ENCODE measurements at regions of chr20 and their contacts with region 1.

Region 1: GRCh38 chr20:35994994-35995453 is 26.6 kb downstream of the CNBD2 start:
- DNase-seq: peak; percentile 83
- ATAC-seq: peak; percentile 92
- H3K4me3 Mint-ChIP-seq: no peak overlapping the region
- H3K27ac Mint-ChIP-seq: no peak overlapping the region
- H3K4me1 Mint-ChIP-seq: peaks cover 4% of the 10 kb centered on the region
- H3K27me3 Mint-ChIP-seq: peaks cover 10% of the 10 kb centered on the region

Region 2: DNA sequence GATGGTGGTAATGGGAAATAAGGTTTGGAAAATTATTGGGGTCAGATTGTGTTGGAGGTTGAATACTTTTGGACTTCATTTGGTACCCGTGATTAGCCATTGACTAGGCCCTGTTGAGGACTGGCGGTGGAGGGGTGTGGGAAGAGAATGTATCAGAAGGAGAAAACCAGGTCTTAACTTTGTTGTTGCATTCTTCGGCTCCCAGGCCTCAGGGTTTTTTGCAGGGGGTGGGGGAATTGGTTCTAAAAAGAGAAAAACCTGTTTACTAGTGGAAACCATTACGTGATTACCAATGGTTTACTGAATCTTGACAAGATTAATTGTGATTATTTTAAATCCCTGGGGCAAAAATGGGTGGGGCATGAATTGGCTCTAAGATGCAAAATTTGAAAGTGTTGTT is 138.2 kb before region 1 on chr20:
- CTCF ChIA-PET with region 1: no interaction called
- DNase-seq: no peak
- ATAC-seq: no peak
- H3K4me3 Mint-ChIP-seq: no peak overlapping the region
- H3K27ac Mint-ChIP-seq: no peak overlapping the region
- H3K4me1 Mint-ChIP-seq: peaks cover 4% of the 10 kb centered on the region
- H3K27me3 Mint-ChIP-seq: no peaks in the 10 kb centered on the region

Region 3: GRCh38 chr20:35978041-35978513 is 16.9 kb before region 1 on chr20:
- CTCF ChIA-PET with region 1: interaction called, 62 read pairs
- DNase-seq: no peak
- ATAC-seq: no peak
- H3K4me3 Mint-ChIP-seq: no peak overlapping the region
- H3K27ac Mint-ChIP-seq: no peak overlapping the region
- H3K4me1 Mint-ChIP-seq: no peaks in the 10 kb centered on the region
- H3K27me3 Mint-ChIP-seq: peaks cover 7% of the 10 kb centered on the region

Region 4: GRCh38 chr20:36128463-36129159 is 133.6 kb after region 1 on chr20:
- CTCF ChIA-PET with region 1: interaction called, 243 read pairs
- DNase-seq: no peak
- ATAC-seq: no peak
- H3K4me3 Mint-ChIP-seq: no peak overlapping the region
- H3K27ac Mint-ChIP-seq: no peak overlapping the region
- H3K4me1 Mint-ChIP-seq: no peaks in the 10 kb centered on the region
- H3K27me3 Mint-ChIP-seq: peaks cover 6% of the 10 kb centered on the region

Region 5: GRCh38 chr20:36149469-36149868 is 154.4 kb after region 1 on chr20:
- CTCF ChIA-PET with region 1: interaction called, 17 read pairs
- DNase-seq: no peak
- ATAC-seq: no peak
- H3K4me3 Mint-ChIP-seq: no peak overlapping the region
- H3K27ac Mint-ChIP-seq: no peak overlapping the region
- H3K4me1 Mint-ChIP-seq: no peaks in the 10 kb centered on the region
- H3K27me3 Mint-ChIP-seq: peaks cover 28% of the 10 kb centered on the region

Region 6: GRCh38 chr20:36199345-36200257 is 204.6 kb after region 1 on chr20:
- CTCF ChIA-PET with region 1: interaction called, 111 read pairs
- DNase-seq: peak; percentile 81
- ATAC-seq: peak; percentile 79
- H3K4me3 Mint-ChIP-seq: no peak overlapping the region
- H3K27ac Mint-ChIP-seq: no peak overlapping the region
- H3K4me1 Mint-ChIP-seq: peaks cover 4% of the 10 kb centered on the region
- H3K27me3 Mint-ChIP-seq: peaks cover 26% of the 10 kb centered on the region